GM12878 (cell line): ENCODE measurements at regions of chr5 and their contacts with region 1.

Region 1: DNA sequence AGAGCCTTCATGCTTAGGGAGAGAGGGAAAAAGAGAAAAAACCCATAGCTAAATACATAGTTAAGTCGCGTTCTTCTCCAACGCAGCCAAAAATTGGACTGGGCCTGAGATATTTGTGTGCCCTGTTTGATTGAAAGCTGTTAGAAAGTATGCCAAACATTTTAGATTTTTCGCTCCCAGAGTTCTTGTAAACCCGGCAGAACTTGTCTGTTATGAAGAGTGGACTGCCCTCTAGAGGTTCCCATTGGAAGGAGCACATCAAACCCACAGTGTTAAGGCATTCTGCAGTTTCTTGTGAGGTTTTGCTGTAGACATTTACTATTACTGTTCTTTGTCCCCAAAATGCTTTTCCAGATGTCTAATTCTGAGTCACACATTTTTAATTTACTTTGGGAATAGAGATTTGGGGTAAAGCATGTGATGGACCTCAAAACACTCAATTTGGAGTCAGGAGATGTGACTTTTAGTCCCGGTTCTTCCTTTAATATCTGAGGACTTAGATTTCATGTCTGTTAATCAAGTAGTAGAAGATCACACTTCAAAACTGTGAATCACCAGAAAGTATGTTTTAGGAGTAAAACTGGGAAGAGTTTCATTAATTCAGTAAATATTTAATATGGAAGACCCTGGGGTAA is 96.6 kb downstream of the PCSK1 start:
- DNase-seq: no peak
- ATAC-seq: peak; percentile 92
- H3K4me3 ChIP-seq: no peak overlapping the region
- H3K27ac ChIP-seq: no peak overlapping the region
- H3K4me1 ChIP-seq: peaks cover 27% of the 10 kb centered on the region
- H3K27me3 ChIP-seq: no peaks in the 10 kb centered on the region; a peak in 1 of 4 replicates
- CTCF ChIP-seq: peak; percentile 87 to 92 (median 88)
- EP300 ChIP-seq: no peak
- POLR2A ChIP-seq: no peak
- RAD21 ChIP-seq: peak; percentile 96

Region 2: DNA sequence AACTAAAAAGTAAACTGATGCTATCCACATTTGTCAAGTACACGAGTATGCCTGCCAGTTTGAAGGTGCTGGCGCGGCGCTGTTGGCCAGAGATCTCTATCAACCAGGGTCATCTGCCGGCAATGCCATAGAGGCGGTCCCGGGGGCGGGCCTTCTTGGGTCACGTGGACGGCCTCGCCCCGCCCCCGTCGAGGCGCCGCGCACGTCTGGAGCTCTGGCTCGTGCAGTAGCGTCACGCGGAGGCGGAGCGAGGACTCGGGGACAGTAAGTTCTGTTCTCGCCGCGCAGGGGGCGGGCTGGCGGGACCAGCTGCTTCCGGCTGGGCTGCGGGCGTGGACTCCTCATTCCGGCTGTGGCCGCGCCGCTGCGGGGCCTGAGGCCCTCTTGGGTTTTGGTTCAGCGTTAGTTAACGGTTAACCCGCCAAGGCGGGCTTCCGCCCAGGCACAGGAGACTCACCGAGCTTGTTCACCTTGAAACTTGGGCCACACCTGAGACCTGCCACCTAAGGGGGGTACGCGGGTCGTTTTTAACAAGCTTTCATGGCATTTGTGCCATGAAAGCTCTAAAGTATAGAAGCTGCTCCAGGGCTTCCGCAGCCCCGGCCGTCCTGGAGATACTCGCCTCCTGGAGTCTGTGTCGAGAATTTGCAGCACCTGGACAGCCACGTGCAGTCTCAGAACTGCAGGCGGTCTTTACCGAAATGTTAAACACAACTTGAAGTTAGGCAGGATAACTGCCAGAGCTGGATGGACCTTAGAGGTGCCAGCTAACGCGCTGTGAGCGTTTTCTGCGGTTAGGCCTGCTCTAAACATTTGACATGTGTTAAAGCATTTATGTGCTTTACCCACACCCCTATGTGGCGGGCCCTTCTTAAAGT is 689.7 kb before region 1 on chr5 and contains the start of gene RFESD:
- CTCF ChIA-PET with region 1: interaction called, 7 read pairs
- POLR2A ChIA-PET with region 1: no interaction called
- RAD21 ChIA-PET with region 1: interaction called, 7 read pairs
- SMC1A ChIA-PET with region 1: interaction called, 4 read pairs
- in situ Hi-C with region 1: no loop called
- intact Hi-C with region 1: loop called (anchors 10 kb)
- DNase-seq: peak; percentile 83
- ATAC-seq: peak; percentile 97
- H3K4me3 ChIP-seq: peak within 1 kb of the TSS; percentile 75
- H3K27ac ChIP-seq: peak within 1 kb of the TSS; percentile 80
- H3K4me1 ChIP-seq: peaks cover 5% of the 10 kb centered on the region
- H3K27me3 ChIP-seq: no peaks in the 10 kb centered on the region
- CTCF ChIP-seq: peak in 2 of 3 experiments; percentile 2 to 9; a peak in 1 of 6 replicates
- EP300 ChIP-seq: no peak
- POLR2A ChIP-seq: peak; percentile 88
- RAD21 ChIP-seq: 0 out of 2 replicates have a peak, but pooled peaks have one; percentile 1
- polyA plus RNA-seq, gene RFESD: 14.0 to 14.7 TPM

Region 3: DNA sequence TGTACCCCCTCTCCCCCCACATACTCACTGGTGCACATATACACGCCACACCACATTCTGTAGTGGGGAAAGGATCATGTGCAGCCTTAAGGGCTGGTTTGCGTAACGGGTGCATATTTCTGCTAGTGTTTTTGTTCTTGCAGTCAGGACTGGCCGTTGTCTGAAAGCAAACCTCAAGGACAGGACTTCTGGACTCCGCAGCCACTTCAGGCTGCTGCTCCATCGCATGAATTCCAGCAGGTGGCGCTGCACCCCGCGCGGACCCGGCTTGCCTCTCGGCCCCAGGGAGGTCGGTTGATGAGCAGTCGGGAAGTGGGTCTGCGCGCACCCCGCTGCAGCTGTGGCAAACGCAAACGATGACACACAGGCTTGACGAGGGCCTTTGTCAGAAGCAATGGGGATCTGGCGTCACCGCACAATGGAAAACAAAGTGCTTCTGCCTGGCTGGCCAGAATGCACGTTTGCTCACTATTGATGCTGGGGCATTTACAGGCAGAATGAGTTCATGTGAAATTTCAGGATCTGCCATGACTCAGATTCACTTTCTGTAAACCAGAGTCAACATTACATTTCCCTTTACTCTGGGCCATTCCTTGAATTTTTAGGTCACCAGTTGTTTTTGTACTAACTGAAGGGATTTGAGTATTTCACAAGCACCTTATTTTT is 477.7 kb before region 1 on chr5:
- CTCF ChIA-PET with region 1: interaction called, 360 read pairs
- POLR2A ChIA-PET with region 1: no interaction called
- RAD21 ChIA-PET with region 1: interaction called, 182 read pairs
- SMC1A ChIA-PET with region 1: interaction called, 289 read pairs
- in situ Hi-C with region 1: loop called (anchors 5 kb)
- intact Hi-C with region 1: loop called (anchors 1 kb)
- DNase-seq: peak; percentile 67
- ATAC-seq: peak; percentile 95
- H3K4me3 ChIP-seq: no peak overlapping the region; the same call in 1 of the 2 replicates
- H3K27ac ChIP-seq: no peak overlapping the region
- H3K4me1 ChIP-seq: peaks cover 21% of the 10 kb centered on the region
- H3K27me3 ChIP-seq: no peaks in the 10 kb centered on the region
- CTCF ChIP-seq: peak; percentile 96 to 99 (median 98)
- EP300 ChIP-seq: no peak
- POLR2A ChIP-seq: no peak
- RAD21 ChIP-seq: peak; percentile 99

Region 4: DNA sequence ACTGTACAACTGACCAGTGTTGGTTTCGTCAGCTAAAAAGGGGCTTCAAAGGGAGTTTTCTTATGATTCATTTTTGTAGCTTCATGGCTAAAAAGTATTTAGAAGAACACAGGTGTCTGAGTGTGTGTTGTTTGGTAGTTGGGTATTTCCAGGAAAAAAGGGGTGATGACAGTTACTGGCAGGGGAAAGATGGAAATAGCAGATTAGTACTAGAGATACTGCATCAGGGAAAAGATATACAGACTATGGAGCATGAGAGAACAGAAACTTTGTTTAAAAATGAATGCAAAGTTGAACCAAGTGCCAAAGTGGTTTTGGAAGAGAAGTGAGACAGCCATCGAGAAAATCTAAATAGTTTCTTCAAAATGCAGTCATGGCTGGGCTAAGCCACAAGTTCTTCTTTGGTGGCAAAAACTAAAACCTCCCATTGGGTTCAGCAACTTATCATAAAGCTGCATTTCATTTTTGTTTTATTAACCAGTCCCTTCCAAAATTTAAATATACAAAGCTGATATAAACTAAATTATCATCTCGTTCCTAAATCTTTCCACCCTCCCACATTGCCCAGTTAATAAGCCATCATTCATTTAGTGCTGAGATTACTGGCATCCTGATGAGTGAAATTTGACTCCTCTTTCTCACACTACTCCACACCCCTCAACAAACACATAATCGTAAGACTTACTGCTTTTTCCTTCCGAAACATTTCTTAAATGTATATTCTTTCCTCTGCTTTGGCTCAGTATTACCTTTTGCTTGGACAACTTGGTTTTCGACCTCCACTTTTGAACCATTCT is 408.3 kb before region 1 on chr5:
- CTCF ChIA-PET with region 1: interaction called, 6 read pairs
- POLR2A ChIA-PET with region 1: interaction called, 3 read pairs
- RAD21 ChIA-PET with region 1: interaction called, 5 read pairs
- SMC1A ChIA-PET with region 1: interaction called, 27 read pairs
- in situ Hi-C with region 1: no loop called
- intact Hi-C with region 1: no loop called
- DNase-seq: peak; percentile 91
- ATAC-seq: peak; percentile 61
- H3K4me3 ChIP-seq: peak overlapping the region; percentile 22
- H3K27ac ChIP-seq: peak overlapping the region; percentile 91
- H3K4me1 ChIP-seq: peaks cover 65% of the 10 kb centered on the region
- H3K27me3 ChIP-seq: no peaks in the 10 kb centered on the region
- CTCF ChIP-seq: no peak
- EP300 ChIP-seq: peak; percentile 95 to 97
- POLR2A ChIP-seq: no peak
- RAD21 ChIP-seq: 0 out of 2 replicates have a peak, but pooled peaks have one; percentile 12

Region 5: GRCh38 chr5:95973793-95974325 is 362.6 kb before region 1 on chr5:
- CTCF ChIA-PET with region 1: interaction called, 14 read pairs
- POLR2A ChIA-PET with region 1: no interaction called
- RAD21 ChIA-PET with region 1: interaction called, 5 read pairs
- SMC1A ChIA-PET with region 1: interaction called, 4 read pairs
- in situ Hi-C with region 1: no loop called
- intact Hi-C with region 1: no loop called
- DNase-seq: peak; percentile 87
- ATAC-seq: peak; percentile 99
- H3K4me3 ChIP-seq: no peak overlapping the region
- H3K27ac ChIP-seq: no peak overlapping the region; the same call in 1 of the 2 replicates
- H3K4me1 ChIP-seq: peaks cover 10% of the 10 kb centered on the region
- H3K27me3 ChIP-seq: no peaks in the 10 kb centered on the region
- CTCF ChIP-seq: no peak
- EP300 ChIP-seq: peak; percentile 52 to 71; a peak in 3 of 4 replicates
- POLR2A ChIP-seq: no peak
- RAD21 ChIP-seq: no peak

Region 6: DNA sequence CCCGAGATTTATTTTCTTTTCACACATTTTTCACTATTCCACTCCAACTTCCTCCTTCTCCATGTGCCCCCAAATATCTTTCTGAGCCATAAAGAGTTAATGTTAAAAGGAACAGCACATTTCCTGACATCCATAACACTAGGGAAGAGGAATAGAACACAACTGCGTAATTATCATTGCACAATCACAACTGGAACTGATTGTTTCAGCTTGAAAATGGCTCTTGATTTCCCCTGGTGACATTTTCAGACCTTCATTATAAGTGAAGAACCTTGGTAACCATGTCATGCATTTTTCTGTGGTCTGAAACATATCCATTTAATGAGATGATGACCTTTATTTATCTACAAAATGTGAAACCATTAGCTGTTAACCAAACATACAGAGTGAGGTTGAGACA is 14.2 kb after region 1 on chr5:
- CTCF ChIA-PET with region 1: interaction called, 27 read pairs
- POLR2A ChIA-PET with region 1: no interaction called
- RAD21 ChIA-PET with region 1: interaction called, 4 read pairs
- SMC1A ChIA-PET with region 1: interaction called, 15 read pairs
- in situ Hi-C with region 1: no loop called
- intact Hi-C with region 1: no loop called
- DNase-seq: no peak
- ATAC-seq: no peak
- H3K4me3 ChIP-seq: no peak overlapping the region
- H3K27ac ChIP-seq: no peak overlapping the region
- H3K4me1 ChIP-seq: no peaks in the 10 kb centered on the region
- H3K27me3 ChIP-seq: no peaks in the 10 kb centered on the region
- CTCF ChIP-seq: no peak
- EP300 ChIP-seq: no peak
- POLR2A ChIP-seq: no peak
- RAD21 ChIP-seq: no peak